Natural killer cell (primary cell): ENCODE measurements at regions of chr17 and their contacts with region 1.

Region 1: DNA sequence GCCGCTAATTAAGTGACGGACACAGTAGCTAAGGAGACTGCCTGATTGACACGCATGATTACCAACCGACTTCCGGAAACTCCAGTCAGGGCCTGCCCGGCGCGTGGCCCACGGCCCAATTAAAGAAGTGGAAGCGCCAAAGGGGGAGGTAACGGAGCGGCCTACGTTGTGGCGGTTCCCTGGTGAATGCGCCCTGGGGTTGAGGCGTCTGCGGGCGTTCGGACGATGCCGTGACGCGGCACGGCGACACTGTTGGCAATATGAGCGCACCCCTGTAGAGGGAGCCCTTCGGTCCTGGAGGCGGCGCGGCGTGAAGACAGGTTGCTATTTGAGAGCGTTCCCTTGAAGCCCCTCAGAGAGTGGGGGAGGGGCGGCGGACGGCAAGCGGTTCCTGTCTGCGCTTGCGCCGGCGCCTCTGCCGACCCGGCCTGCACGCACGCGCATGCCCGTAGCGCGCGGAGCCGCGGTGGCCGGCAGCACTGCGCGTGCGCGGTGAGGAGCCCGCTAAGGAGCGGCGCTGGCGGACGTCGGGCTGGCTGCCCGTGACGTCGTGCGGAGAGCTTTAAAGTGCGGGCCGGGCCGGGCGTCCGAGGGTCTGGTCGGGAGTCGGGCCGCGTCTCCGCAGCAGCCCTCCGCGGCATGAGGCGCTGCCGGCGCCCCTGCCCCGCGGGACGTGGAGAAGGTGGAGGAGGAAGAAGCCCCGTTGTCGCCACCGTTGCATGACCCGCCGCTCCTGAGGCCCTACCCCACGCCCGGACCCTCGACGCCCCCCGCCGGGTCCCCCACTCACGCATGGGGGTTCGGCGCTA is at the start of gene ALKBH5:
- DNase-seq: peak; percentile 98 to 99
- ATAC-seq: peak; percentile 80 to 92 (median 84)
- H3K4me3 ChIP-seq: peak within 1 kb of the TSS; percentile 88
- H3K4me3 Mint-ChIP-seq: peak within 1 kb of the TSS; percentile 96
- H3K27ac ChIP-seq: peak within 1 kb of the TSS; percentile 98
- H3K27ac Mint-ChIP-seq: peak within 1 kb of the TSS; percentile 98 to 99
- H3K4me1 ChIP-seq: peaks cover 52% of the 10 kb centered on the region
- H3K4me1 Mint-ChIP-seq: peaks cover 39 to 56% of the 10 kb centered on the region in 2 donors
- H3K27me3 ChIP-seq: no peaks in the 10 kb centered on the region
- H3K27me3 Mint-ChIP-seq: no peaks in the 10 kb centered on the region
- CTCF ChIP-seq: peak; percentile 65
- total RNA-seq, gene ALKBH5: 95.6 to 114 (median 96.7) TPM

Region 2: GRCh38 chr17:17919169-17920107 is 264.1 kb before region 1 on chr17:
- intact Hi-C with region 1: no loop called
- DNase-seq: peak; percentile 26 to 81
- ATAC-seq: peak; percentile 70 to 86 (median 72)
- H3K4me3 ChIP-seq: no peak overlapping the region
- H3K4me3 Mint-ChIP-seq: no peak overlapping the region
- H3K27ac ChIP-seq: no peak overlapping the region
- H3K27ac Mint-ChIP-seq: no peak overlapping the region
- H3K4me1 ChIP-seq: no peaks in the 10 kb centered on the region
- H3K4me1 Mint-ChIP-seq: peaks cover 24 to 29% of the 10 kb centered on the region in 2 donors
- H3K27me3 ChIP-seq: no peaks in the 10 kb centered on the region
- H3K27me3 Mint-ChIP-seq: no peaks in the 10 kb centered on the region
- CTCF ChIP-seq: peak; percentile 54

Region 3: GRCh38 chr17:18141210-18141803 is 42.2 kb before region 1 on chr17:
- intact Hi-C with region 1: loop called (anchors 2 kb)
- DNase-seq: peak in 1 of 2 donors; percentile 82
- ATAC-seq: peak; percentile 55 to 93 (median 77)
- H3K4me3 ChIP-seq: no peak overlapping the region
- H3K4me3 Mint-ChIP-seq: no peak overlapping the region
- H3K27ac ChIP-seq: no peak overlapping the region
- H3K27ac Mint-ChIP-seq: no peak overlapping the region
- H3K4me1 ChIP-seq: no peaks in the 10 kb centered on the region
- H3K4me1 Mint-ChIP-seq: peaks cover 5 to 6% of the 10 kb centered on the region in 2 donors
- H3K27me3 ChIP-seq: no peaks in the 10 kb centered on the region
- H3K27me3 Mint-ChIP-seq: no peaks in the 10 kb centered on the region
- CTCF ChIP-seq: peak; percentile 66

Region 4: DNA sequence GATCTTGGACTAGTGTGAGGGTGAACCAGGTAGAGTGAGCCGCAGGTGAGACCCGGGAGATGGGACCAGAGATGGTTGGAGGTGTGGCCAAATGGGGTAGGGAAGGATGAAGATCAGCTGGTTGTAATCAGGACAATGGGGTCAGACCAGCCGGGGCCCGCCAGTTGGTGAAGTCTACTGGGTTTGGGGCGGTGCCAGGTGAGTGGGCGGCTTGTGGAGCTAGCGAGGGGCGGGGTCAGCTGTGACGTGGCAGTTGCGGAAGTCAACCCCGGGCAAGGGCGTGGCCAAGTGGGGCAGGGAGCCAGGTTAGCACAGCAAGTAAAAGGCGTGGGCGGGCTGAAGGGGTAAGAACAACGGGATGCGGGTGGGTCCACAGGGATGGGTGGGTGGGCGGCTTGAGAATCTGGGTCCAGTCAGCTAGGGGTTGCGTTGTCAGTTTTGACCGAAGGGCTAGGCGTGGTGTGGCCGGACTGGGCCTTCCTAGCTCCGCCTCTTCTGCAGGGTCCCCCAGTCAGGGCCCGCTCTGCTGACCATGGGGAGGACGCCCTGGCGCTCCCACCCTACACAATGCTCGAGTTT is 25.4 kb before region 1 on chr17:
- intact Hi-C with region 1: loop called (anchors 1 kb)
- DNase-seq: peak; percentile 89 to 96
- ATAC-seq: peak; percentile 88 to 92 (median 91)
- H3K4me3 ChIP-seq: peak overlapping the region; percentile 43
- H3K4me3 Mint-ChIP-seq: peak overlapping the region; percentile 93
- H3K27ac ChIP-seq: peak overlapping the region; percentile 44
- H3K27ac Mint-ChIP-seq: peak overlapping the region; percentile 84 to 94
- H3K4me1 ChIP-seq: peaks cover 21% of the 10 kb centered on the region
- H3K4me1 Mint-ChIP-seq: peaks cover 6 to 15% of the 10 kb centered on the region in 2 donors
- H3K27me3 ChIP-seq: no peaks in the 10 kb centered on the region
- H3K27me3 Mint-ChIP-seq: no peaks in the 10 kb centered on the region
- CTCF ChIP-seq: no peak

Region 5: GRCh38 chr17:18225121-18225566 is 41.6 kb after region 1 on chr17:
- intact Hi-C with region 1: loop called (anchors 2 kb)
- DNase-seq: peak; percentile 95 to 96
- ATAC-seq: peak; percentile 97 to 99 (median 98)
- H3K4me3 ChIP-seq: peak overlapping the region; percentile 20
- H3K4me3 Mint-ChIP-seq: peak overlapping the region; percentile 53
- H3K27ac ChIP-seq: peak overlapping the region; percentile 49
- H3K27ac Mint-ChIP-seq: peak overlapping the region; percentile 31 to 82
- H3K4me1 ChIP-seq: peaks cover 19% of the 10 kb centered on the region
- H3K4me1 Mint-ChIP-seq: peaks cover 27 to 28% of the 10 kb centered on the region in 2 donors
- H3K27me3 ChIP-seq: no peaks in the 10 kb centered on the region
- H3K27me3 Mint-ChIP-seq: no peaks in the 10 kb centered on the region
- CTCF ChIP-seq: no peak

Region 6: GRCh38 chr17:18260332-18261144 is 77.0 kb after region 1 on chr17 and contains the start of gene MIEF2:
- intact Hi-C with region 1: loop called (anchors 5 kb)
- DNase-seq: peak; percentile 88 to 95
- ATAC-seq: peak; percentile 87 to 92 (median 90)
- H3K4me3 ChIP-seq: peak within 1 kb of the TSS; percentile 76
- H3K4me3 Mint-ChIP-seq: peak within 1 kb of the TSS; percentile 83
- H3K27ac ChIP-seq: peak within 1 kb of the TSS; percentile 88
- H3K27ac Mint-ChIP-seq: peak within 1 kb of the TSS; percentile 70 to 81
- H3K4me1 ChIP-seq: peaks cover 51% of the 10 kb centered on the region
- H3K4me1 Mint-ChIP-seq: peaks cover 17 to 36% of the 10 kb centered on the region in 2 donors
- H3K27me3 ChIP-seq: no peaks in the 10 kb centered on the region
- H3K27me3 Mint-ChIP-seq: no peaks in the 10 kb centered on the region
- CTCF ChIP-seq: no peak
- total RNA-seq, gene MIEF2: 10.6 to 12.8 (median 11.3) TPM